Left colon (tissue), 2 donors: ENCODE measurements at regions of chr12 and their contacts with region 1.

Region 1: GRCh38 chr12:48084066-48084465 is 21.8 kb downstream of the SENP1 start:
- DNase-seq: no peak
- ATAC-seq: no peak

Region 2: GRCh38 chr12:47828608-47829536 is 255.2 kb before region 1 on chr12:
- intact Hi-C with region 1: no loop called
- DNase-seq: peak; percentile 80 to 89
- ATAC-seq: peak; percentile 97

Region 3: DNA sequence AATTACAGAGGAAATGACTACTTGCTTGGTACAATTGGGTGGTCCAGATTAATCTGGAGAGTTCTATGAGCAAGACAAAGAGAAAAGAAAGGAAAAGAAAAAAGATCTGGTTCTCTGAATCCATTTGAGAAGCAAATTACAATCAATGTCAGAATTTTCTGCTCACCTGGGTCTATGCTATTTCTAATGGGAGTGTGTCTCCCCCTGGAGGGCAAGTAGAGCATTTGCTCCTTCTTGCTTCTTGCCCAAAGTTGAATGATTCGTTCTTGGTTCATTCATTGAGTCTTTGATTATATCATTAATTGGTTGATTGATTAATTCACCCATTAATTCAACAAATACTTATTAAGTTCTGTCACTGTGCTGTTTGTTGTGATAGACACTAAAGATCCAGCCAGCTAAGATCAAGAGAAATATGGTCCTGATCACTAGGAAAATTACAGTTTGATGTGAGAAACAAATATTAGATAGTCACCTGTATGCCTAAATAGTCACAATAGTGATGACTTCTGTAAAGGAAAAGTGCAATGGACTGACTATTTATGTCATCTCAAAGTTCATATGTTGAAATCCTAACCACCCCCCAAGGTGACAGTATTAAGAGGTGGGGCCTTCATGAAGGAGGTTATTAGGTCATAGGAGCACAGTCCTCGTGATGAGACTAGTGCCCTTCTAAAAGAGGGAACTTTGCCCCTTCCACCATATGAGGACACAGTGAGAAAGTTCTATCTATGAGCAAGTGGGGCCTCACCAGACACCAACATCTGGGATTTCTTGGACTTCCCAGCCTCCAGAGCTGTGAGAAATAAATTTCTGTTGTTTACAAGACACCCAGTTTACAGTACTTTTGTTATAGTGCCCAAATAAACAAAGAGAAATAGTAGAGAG is 81.3 kb after region 1 on chr12:
- intact Hi-C with region 1: loop called in 1 of 2 experiments (anchors 10 kb)
- DNase-seq: no peak
- ATAC-seq: peak; percentile 75